ENCODE measurements at regions of chr19 and their contacts with region 1.

Region 1: GRCh38 chr19:51311351-51312257 is at the start of gene IGLON5:
- DNase-seq: no peak
- H3K4me3 ChIP-seq: no peak within 1 kb of the TSS
- H3K27ac ChIP-seq: no peak within 1 kb of the TSS
- H3K4me1 ChIP-seq: no peaks in the 10 kb centered on the region
- H3K27me3 ChIP-seq: peaks cover 47% of the 10 kb centered on the region
- CTCF ChIP-seq: no peak
- EP300 ChIP-seq: no peak
- POLR2A ChIP-seq: no peak
- total RNA-seq, gene IGLON5: 0.27 TPM in 1 of 4 donors, not detected in the others

Region 2: DNA sequence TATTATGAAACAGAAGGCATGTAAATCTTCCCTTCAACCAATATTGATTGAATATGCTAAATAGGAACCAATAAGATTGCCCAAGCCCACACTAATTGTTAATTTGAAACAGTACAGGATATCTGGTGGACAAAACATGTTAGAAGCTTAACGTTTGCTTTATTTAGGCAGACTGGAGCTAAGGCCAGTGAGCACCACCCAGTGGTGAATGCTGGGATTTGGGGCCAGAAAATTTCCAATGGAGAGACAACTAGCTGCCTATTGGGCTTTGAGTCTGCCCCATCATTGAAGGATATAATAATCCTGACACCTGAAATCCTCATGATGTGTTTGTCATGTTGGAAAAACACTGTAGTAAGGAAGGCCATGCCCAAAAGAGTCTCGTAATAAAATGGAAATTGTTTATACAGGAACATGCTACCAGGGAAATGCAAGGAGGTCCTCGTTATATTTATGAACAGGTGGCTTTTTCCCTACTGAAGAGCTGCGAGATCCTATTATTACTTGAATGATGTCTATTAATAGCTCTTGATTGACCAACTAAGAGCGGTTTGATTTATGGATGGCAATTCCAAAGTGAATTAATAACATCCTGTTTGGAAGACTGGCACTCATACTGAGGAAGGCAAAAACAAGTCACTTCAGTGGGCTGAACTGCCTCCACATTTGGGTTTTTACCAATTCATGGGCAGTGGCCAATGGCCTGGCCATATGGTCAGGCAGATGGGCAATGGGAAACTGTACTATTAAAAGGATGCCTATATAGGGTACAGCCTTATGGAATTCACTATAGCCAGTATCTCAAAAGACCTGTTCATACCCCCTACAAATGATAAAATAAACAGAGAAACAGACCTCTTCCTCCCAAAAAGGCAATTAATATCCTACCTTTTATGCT is 52.0 kb before region 1 on chr19:
- in situ Hi-C with region 1: no loop called
- intact Hi-C with region 1: loop called (anchors 2 kb)
- DNase-seq: no peak
- H3K4me3 ChIP-seq: no peak overlapping the region
- H3K27ac ChIP-seq: no peak overlapping the region
- H3K4me1 ChIP-seq: no peaks in the 10 kb centered on the region
- H3K27me3 ChIP-seq: peaks cover 5% of the 10 kb centered on the region
- CTCF ChIP-seq: peak in 4 of 5 experiments; percentile 22 to 47 (median 38)
- EP300 ChIP-seq: no peak
- POLR2A ChIP-seq: no peak